A673 (cell line): ENCODE measurements at regions of chr13 and their contacts with region 1.

Region 1: DNA sequence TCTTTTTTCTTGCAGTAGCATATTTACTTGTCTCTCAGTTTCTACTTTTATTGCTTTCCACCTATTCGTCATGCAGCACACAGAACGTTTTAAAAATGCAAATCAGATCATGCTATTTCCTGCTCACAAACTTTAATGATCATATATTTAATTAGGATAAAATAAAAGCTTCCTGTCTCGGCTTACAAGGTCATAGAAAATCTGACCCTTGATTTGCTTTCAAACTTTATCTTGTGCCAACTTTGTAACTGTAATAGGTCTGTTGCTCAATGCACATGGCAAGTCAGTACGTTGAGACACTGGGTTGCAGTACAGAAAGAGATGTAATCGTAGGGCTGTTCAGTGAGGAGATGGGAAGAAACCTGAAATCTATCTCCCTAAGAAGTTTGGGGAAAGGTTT is 95.6 kb upstream of the CSNK1A1L start:
- DNase-seq: peak; percentile 97
- H3K4me3 ChIP-seq: no peak overlapping the region
- H3K27ac ChIP-seq: peak overlapping the region; percentile 37
- H3K4me1 ChIP-seq: peaks cover 14% of the 10 kb centered on the region
- H3K27me3 ChIP-seq: no peaks in the 10 kb centered on the region
- CTCF ChIP-seq: no peak

Region 2: DNA sequence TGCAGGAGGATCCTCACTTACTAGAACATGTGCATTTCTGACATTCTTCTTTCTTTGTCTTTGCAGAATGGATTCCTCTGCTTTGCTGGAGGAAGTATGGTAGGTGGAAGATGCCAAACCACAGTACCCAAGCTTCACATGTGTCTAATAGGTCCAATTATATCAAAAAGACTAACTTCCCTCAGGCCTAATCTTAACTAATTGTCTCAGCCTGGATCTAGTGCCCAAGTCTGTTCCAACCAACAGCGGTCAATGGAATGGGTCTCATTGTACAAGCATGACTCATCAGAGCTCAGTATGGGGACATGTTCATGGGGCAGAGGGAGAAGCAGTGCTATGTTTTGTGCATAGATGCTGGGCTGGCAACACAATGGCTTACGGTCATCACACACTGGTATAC is 14.0 kb before region 1 on chr13:
- CTCF ChIA-PET with region 1: no interaction called
- POLR2A ChIA-PET with region 1: no interaction called
- intact Hi-C with region 1: loop called (anchors 2 kb)
- DNase-seq: peak; percentile 94
- H3K4me3 ChIP-seq: no peak overlapping the region
- H3K27ac ChIP-seq: no peak overlapping the region
- H3K4me1 ChIP-seq: peaks cover 14% of the 10 kb centered on the region
- H3K27me3 ChIP-seq: no peaks in the 10 kb centered on the region
- CTCF ChIP-seq: no peak